Activated T-helper 1 cell treated with anti-CD3 and anti-CD28 coated beads, Interleukin-12 subunit alpha, Interleukin-12 subunit beta, Interleukin-2, Interleukin-4 antibody, amounts not matched to agents 30 ng/mL and 10 ng/mL and 1 ng/mL, durations not matched to agents 14 hours and 24 hours and 36 hours (primary cell): ENCODE measurements at regions of chr2 and their contacts with region 1.

Region 1: DNA sequence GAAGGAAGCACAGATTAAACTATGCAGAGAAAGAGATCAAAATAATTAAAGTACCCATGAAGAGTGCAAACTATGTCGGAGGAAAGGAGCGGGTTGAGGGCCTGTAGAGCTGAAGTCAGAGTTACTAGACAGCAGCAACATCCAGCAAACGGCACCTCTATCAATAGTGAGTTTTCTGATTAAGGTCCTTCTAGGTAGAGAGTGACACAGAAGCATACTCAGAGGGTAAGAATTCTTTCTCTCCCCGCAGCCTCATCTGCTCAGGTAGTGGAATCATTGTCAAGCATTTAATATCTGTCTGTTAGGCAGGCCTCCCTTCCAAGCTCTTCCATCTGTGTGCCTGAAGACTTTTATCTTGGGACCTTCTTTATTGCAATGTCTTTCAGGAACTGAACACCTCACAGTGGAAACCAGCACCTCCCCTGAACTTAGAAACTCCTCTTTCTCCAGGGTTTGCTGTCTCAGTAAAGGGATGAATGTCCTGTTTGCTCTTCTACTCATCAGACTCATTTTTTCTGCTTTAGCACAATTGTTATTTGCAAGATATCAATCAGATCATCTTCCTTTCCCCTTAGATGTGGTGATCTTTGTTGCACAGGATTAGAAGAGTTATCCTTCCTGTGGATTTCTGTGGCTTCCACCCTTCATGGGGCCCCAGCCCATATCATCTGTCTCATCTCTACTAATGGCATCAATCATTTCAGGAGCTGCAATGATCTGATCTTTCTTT is 28.8 kb downstream of the SP140 start:
- DNase-seq: no peak
- H3K4me3 Mint-ChIP-seq: no peak overlapping the region
- H3K27ac Mint-ChIP-seq: no peak overlapping the region
- H3K4me1 Mint-ChIP-seq: peaks cover 12% of the 10 kb centered on the region
- H3K27me3 Mint-ChIP-seq: no peaks in the 10 kb centered on the region

Region 2: DNA sequence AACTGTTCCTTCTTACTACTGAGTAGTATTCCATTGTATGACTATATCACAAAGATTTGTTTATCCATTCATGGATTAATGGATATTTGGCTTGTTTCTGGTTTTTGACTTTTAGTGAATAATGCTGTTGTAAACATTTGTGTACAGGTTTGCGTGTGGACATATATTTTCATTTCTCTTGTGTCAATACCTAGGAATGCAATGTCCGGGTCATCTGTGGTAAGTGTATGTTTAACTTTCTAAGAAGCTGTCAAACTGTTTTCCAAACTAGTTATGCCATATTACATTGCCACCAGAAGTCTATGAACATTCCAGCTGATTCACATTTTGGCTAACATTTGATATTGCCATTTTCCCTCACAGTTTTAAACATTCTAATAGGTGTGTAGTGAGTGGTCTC is 156.5 kb before region 1 on chr2:
- intact Hi-C with region 1: no loop called
- DNase-seq: no peak
- H3K4me3 Mint-ChIP-seq: no peak overlapping the region
- H3K27ac Mint-ChIP-seq: no peak overlapping the region
- H3K4me1 Mint-ChIP-seq: no peaks in the 10 kb centered on the region
- H3K27me3 Mint-ChIP-seq: peaks cover 34% of the 10 kb centered on the region

Region 3: DNA sequence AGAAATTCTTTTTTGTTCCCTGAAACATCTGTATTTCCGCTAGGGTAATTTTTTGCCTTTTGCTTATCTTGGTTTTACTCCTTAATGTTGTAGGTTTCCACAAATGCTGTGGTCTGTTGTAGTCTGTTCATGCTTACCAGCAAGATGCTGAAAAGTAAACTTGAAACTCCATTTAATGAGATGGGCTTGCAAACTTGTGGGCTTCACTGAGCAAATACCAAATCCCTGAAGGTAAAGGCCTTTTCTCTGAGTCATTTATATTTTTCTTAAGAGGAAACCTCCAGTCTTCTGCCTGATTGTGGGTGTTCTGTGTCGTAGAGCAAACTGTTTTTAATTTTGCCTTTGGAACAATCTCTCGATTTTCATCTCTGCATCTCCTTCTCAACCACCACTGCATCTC is 19.5 kb before region 1 on chr2:
- intact Hi-C with region 1: loop called (anchors 1 kb)
- DNase-seq: no peak
- H3K4me3 Mint-ChIP-seq: peak overlapping the region; percentile 72
- H3K27ac Mint-ChIP-seq: peak overlapping the region; percentile 96
- H3K4me1 Mint-ChIP-seq: peaks cover 60% of the 10 kb centered on the region
- H3K27me3 Mint-ChIP-seq: no peaks in the 10 kb centered on the region

Region 4: DNA sequence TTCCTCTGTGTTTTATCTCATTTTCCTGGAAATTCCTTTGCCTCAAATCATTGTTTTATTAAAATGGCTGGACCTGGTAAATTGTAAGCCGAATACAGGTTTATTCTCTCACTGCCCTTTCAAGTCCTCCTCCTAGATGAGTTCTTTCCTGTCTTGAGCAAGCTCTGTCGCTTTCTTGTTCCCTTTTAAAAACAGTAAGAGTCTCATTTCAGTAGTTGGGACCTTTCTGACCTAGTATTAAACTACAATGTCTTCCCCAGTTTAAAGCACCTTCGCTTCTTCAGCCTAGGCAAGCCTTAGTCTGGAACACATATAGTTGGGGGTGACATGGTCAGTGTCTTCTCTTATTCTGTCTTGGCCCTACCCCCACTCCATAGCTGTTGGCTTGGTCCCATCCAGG is 31.7 kb after region 1 on chr2:
- intact Hi-C with region 1: loop called (anchors 1 kb)
- DNase-seq: no peak
- H3K4me3 Mint-ChIP-seq: no peak overlapping the region
- H3K27ac Mint-ChIP-seq: peak overlapping the region; percentile 6
- H3K4me1 Mint-ChIP-seq: peaks cover 35% of the 10 kb centered on the region
- H3K27me3 Mint-ChIP-seq: no peaks in the 10 kb centered on the region

Region 5: DNA sequence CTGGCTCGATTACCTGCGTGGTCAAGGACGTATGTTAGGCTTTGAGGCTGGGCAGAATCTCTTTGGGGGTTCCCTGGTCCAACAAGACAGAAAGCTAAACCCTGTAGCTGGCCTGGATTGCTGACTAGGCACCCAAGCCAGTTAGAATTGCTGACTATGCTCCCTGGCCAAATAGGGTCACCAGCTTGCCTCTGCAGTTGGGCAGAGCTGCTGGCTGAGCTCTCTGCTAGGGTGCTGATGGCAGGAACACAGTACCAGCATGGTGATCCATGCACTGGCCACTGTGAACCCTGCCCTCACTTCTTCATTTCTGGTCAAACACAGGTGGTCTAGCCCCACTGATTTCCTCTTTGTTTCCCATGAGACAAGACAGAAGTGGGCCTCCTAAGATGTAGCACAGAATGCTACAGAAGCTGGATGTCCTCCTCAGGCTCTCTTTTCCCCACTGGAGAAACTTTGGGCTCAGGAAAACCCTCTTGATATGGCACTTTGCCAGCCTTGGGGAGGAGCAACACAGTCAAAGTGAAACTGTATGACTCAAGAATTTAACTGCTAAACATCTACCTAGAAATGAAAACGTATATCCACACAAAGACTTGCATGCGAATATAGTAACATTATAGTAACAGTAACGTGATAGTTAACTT is 93.5 kb after region 1 on chr2:
- intact Hi-C with region 1: loop called (anchors 1 kb)
- DNase-seq: peak; percentile 32
- H3K4me3 Mint-ChIP-seq: peak overlapping the region; percentile 59
- H3K27ac Mint-ChIP-seq: peak overlapping the region; percentile 90
- H3K4me1 Mint-ChIP-seq: peaks cover 80% of the 10 kb centered on the region
- H3K27me3 Mint-ChIP-seq: no peaks in the 10 kb centered on the region

Region 6: DNA sequence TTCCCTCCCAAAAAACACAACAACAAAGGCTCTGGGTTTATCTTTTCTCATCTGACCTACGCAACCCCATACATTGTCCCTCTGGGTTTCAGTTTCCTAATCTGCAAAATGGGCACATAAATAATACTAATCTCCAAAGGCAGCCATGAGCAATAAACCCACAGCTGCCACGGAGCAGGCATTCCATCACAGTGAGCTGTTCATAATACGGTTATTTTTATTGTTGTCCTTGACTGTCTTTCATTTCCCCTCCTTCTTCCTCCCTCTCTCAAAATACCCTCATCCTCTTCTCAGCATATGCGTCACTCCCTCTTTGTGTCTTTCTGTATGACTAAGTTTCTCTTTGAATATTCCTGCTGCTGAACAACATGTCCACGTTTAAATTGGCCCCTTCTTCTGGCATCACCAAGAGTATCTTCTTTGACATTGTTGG is 328.6 kb after region 1 on chr2:
- intact Hi-C with region 1: loop called (anchors 1 kb)
- DNase-seq: no peak
- H3K4me3 Mint-ChIP-seq: peak overlapping the region; percentile 24
- H3K27ac Mint-ChIP-seq: peak overlapping the region; percentile 62
- H3K4me1 Mint-ChIP-seq: peaks cover 27% of the 10 kb centered on the region
- H3K27me3 Mint-ChIP-seq: no peaks in the 10 kb centered on the region